Dorsolateral prefrontal cortex (tissue), 120 donors: ENCODE measurements at regions of chr22 and their contacts with region 1.

Region 1: DNA sequence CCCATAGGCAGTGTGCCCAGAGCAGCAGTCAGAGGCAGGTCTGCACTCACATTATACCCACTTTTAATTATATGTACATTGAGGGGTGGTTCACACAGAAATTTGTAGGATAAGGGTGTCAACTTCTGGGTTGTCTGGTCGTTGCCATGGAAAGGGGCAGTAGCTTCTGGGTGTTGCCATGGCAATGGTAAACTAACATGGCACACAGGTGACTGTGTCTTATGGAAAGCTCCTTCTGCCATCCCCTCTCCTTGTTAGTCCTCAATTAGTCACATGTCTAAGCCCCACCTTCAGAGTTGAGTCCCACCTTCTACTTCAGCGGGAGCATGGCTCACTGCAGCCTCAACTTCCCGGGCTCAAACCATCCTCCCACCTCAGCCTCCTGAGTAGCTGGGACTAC is 56.3 kb upstream of the ATXN10 start:
- DNase-seq: no peak
- H3K4me3 ChIP-seq: no peak overlapping the region
- H3K27ac ChIP-seq: no peak overlapping the region
- H3K27me3 ChIP-seq: no peaks in the 10 kb centered on the region
- CTCF ChIP-seq: no peak

Region 2: DNA sequence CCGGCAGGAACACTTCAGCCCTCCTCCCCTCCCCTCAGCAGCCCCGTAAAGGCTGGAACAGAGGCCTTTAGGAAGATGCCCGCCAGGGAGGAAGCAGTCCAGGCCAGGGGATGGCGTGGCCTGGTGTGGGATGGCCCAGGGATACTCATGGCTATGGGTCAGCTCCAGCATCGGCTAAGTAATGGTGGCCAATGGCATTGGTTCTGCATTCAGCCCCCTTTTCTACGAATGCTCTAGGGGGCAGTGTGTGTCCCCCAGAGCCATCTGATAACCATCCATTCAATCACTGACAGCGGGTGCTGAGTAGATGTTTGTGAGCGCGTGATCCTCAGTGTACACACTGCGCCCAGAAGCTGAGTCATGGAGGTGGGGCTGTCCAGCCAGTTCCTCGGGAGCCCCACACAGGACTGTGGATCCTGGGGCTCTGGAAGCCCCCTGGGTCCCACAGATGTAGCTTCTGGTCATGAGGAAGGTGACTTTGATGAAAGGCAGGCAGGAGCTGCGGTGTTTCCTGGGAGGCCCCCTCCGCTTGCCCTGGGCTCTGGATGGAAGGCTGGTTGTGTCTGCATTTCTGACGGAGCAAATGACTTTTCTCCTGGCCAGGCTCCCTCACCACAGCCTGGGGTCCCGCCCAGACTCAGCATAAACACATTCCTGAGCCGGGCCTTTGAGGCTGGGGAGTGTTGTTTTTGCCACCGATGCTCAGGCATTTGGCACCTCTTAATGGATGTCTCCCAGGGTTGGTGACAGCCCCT is 66.2 kb before region 1 on chr22:
- intact Hi-C with region 1: no loop called
- DNase-seq: no peak
- H3K4me3 ChIP-seq: no peak overlapping the region
- H3K27ac ChIP-seq: peak overlapping the region in 12 of 59 donors; percentile 7 to 67 (median 40)
- H3K27me3 ChIP-seq: peaks cover 0 to 5% (median 0%) of the 10 kb centered on the region in 45 donors
- CTCF ChIP-seq: peak in 1 of 56 donors; percentile 8

Region 3: GRCh38 chr22:47593911-47594311 is 1978.5 kb after region 1 on chr22:
- intact Hi-C with region 1: loop called in 1 of 2 experiments (anchors 5 kb)
- DNase-seq: no peak
- H3K4me3 ChIP-seq: no peak overlapping the region
- H3K27ac ChIP-seq: no peak overlapping the region
- H3K27me3 ChIP-seq: peaks cover 0 to 10% (median 0%) of the 10 kb centered on the region in 45 donors
- CTCF ChIP-seq: no peak